Tibial artery (tissue), 4 donors: ENCODE measurements at regions of chr1 and their contacts with region 1.

Region 1: GRCh38 chr1:234621657-234622335 is 11.8 kb upstream of the IRF2BP2 start:
- DNase-seq: no peak
- H3K4me3 ChIP-seq: no peak overlapping the region
- H3K27ac ChIP-seq: no peak overlapping the region
- H3K4me1 ChIP-seq: peaks cover 0 to 52% (median 26%) of the 10 kb centered on the region in 4 donors
- H3K27me3 ChIP-seq: no peaks in the 10 kb centered on the region
- CTCF ChIP-seq: no peak

Region 2: GRCh38 chr1:234355782-234356510 is 265.9 kb before region 1 on chr1:
- intact Hi-C with region 1: no loop called
- DNase-seq: no peak
- H3K4me3 ChIP-seq: no peak overlapping the region
- H3K27ac ChIP-seq: no peak overlapping the region
- H3K4me1 ChIP-seq: no peaks in the 10 kb centered on the region
- H3K27me3 ChIP-seq: peaks cover 0 to 4% of the 10 kb centered on the region in 2 donors
- CTCF ChIP-seq: no peak

Region 3: DNA sequence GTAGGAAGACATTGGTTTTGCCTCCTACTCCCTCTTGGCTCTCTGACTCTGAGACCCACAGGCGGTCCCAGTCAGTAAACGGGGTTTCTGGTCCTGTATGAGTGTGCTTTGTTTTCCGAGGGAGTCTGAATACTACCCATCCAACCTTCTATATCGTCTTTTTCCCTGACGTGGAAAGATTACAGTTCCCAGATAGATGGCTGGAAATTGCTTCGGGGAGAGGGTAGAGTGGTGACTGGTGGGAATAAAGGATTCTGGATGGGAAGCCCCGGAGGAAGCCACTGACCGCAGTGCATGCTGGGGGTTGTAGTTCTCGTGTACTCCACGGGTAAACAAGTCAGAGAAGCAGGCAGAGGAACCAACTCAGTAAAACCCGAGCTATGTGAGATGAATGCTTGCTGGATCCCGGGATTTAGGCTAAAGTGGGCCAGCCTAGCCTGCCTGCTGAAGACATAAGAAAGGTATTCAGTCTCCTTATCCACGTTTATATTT is 54.4 kb after region 1 on chr1:
- intact Hi-C with region 1: loop called (anchors 10 kb)
- DNase-seq: peak; percentile 80 to 86
- H3K4me3 ChIP-seq: peak overlapping the region; percentile 34 to 44
- H3K27ac ChIP-seq: peak overlapping the region; percentile 54 to 55
- H3K4me1 ChIP-seq: peaks cover 0 to 10% (median 0%) of the 10 kb centered on the region in 4 donors
- H3K27me3 ChIP-seq: no peaks in the 10 kb centered on the region
- CTCF ChIP-seq: no peak